Heart right ventricle (tissue), 16 donors: ENCODE measurements at regions of chr15 and their contacts with region 1.

Region 1: GRCh38 chr15:60179786-60180391 is 175.8 kb downstream of the FOXB1 start:
- DNase-seq: no peak
- ATAC-seq: no peak
- H3K4me3 ChIP-seq: no peak overlapping the region
- H3K27ac ChIP-seq: no peak overlapping the region
- H3K4me1 ChIP-seq: no peaks in the 10 kb centered on the region
- H3K27me3 ChIP-seq: peaks cover 0 to 36% (median 12%) of the 10 kb centered on the region in 7 donors
- CTCF ChIP-seq: peak; percentile 47 to 91 (median 78)

Region 2: GRCh38 chr15:59699810-59700431 is 480.0 kb before region 1 on chr15:
- intact Hi-C with region 1: loop called in 2 of 10 experiments (anchors 5 to 10 kb)
- DNase-seq: no peak
- ATAC-seq: no peak
- H3K4me3 ChIP-seq: no peak overlapping the region
- H3K27ac ChIP-seq: no peak overlapping the region
- H3K4me1 ChIP-seq: no peaks in the 10 kb centered on the region
- H3K27me3 ChIP-seq: peaks cover 0 to 14% (median 4%) of the 10 kb centered on the region in 7 donors
- CTCF ChIP-seq: no peak

Region 3: DNA sequence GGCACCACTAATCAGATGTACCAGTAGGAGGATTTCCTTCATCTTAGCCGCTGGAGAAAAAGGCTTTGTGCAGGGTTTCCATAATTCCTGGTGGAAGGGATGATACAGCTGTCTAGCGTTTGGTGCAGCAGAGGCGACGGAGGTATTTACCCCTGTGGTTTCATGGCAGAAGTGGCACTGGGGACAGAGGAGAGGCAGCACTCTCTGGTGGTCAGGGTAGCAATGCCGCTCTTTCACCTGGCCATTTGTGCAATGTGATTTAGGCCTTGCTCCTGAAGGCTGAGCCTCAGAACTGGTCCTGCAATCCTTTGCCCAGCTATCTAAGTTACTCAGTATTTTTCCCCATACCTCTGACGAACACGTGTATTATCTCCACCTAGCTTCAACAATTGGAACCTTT is 443.7 kb before region 1 on chr15:
- intact Hi-C with region 1: loop called in 1 of 10 experiments (anchors 10 kb)
- DNase-seq: no peak
- ATAC-seq: no peak
- H3K4me3 ChIP-seq: no peak overlapping the region
- H3K27ac ChIP-seq: no peak overlapping the region
- H3K4me1 ChIP-seq: no peaks in the 10 kb centered on the region
- H3K27me3 ChIP-seq: peaks cover 0 to 30% (median 13%) of the 10 kb centered on the region in 7 donors
- CTCF ChIP-seq: peak in 1 of 9 donors; percentile 25

Region 4: DNA sequence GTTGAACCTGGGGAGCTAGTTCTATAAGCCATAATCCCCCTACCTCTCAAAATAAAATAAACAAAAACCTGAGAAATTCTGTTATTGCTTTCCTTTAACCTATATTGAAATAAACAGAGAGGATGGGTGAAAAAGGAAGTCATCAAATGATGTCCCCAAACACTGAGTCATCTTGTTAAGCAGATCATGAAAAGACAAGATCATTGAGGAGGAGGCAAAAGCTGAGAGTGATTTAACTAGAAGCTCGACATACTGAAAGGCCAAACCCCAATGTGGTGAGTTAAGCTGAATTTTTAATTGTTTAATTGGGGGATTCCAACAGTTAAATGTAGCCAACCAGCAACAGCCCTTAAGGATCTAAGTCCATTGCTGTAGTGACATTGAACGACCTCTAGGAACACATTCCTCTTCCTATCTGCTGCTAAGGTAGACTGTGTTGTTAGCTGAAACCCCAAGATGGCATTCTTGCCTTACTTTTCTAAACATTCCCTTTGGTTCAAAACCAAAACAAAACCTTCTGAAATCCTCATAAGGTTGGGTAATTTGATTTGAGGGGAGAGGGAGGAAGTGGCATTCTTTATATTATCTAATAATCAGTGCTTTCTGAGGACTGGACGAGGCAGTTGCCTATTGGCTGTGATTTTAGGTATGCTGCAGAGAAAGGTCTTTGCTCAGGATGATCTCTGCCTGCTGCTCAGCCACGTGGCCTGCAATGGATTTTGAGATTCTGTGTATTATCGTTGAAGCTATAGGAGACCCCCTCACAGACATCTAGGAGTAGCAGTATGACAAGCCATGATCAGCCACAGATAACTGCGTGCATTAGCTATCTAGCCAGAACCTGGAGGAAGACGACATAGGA is 428.1 kb before region 1 on chr15:
- intact Hi-C with region 1: loop called in 3 of 10 experiments (anchors 5 to 10 kb)
- DNase-seq: no peak
- ATAC-seq: peak in 1 of 8 donors; percentile 38
- H3K4me3 ChIP-seq: no peak overlapping the region
- H3K27ac ChIP-seq: no peak overlapping the region
- H3K4me1 ChIP-seq: no peaks in the 10 kb centered on the region
- H3K27me3 ChIP-seq: peaks cover 0 to 54% (median 31%) of the 10 kb centered on the region in 7 donors
- CTCF ChIP-seq: peak in 6 of 9 donors; percentile 20 to 53 (median 36)

Region 5: GRCh38 chr15:60605879-60606304 is 426.0 kb after region 1 on chr15:
- intact Hi-C with region 1: no loop called
- DNase-seq: peak in 1 of 2 donors; percentile 62
- ATAC-seq: peak; percentile 67 to 96 (median 94)
- H3K4me3 ChIP-seq: peak overlapping the region in 8 of 10 donors; percentile 2 to 35 (median 26)
- H3K27ac ChIP-seq: peak overlapping the region in 9 of 10 donors; percentile 15 to 81 (median 56)
- H3K4me1 ChIP-seq: peaks cover 0 to 31% (median 20%) of the 10 kb centered on the region in 9 donors
- H3K27me3 ChIP-seq: no peaks in the 10 kb centered on the region
- CTCF ChIP-seq: no peak